IMR-90 (cell line): ENCODE measurements at regions of chr11 and their contacts with region 1.

Region 1: GRCh38 chr11:44998051-44998450 is 47.4 kb upstream of the TP53I11 start:
- DNase-seq: no peak
- ATAC-seq: no peak
- H3K4me3 ChIP-seq: no peak overlapping the region
- H3K27ac ChIP-seq: no peak overlapping the region
- H3K4me1 ChIP-seq: no peaks in the 10 kb centered on the region
- H3K27me3 ChIP-seq: peaks cover 40% of the 10 kb centered on the region
- CTCF ChIP-seq: no peak
- POLR2A ChIP-seq: no peak
- RAD21 ChIP-seq: no peak

Region 2: GRCh38 chr11:44950625-44951476 is 47.2 kb before region 1 on chr11 and contains the start of gene TP53I11:
- CTCF ChIA-PET with region 1: no interaction called
- POLR2A ChIA-PET with region 1: no interaction called
- dilution Hi-C with region 1: no loop called
- in situ Hi-C with region 1: no loop called
- intact Hi-C with region 1: loop called (anchors 2 kb)
- DNase-seq: peak; percentile 60
- ATAC-seq: peak; percentile 84
- H3K4me3 ChIP-seq: peak within 1 kb of the TSS; percentile 95
- H3K27ac ChIP-seq: peak within 1 kb of the TSS; percentile 87
- H3K4me1 ChIP-seq: peaks cover 11% of the 10 kb centered on the region
- H3K27me3 ChIP-seq: no peaks in the 10 kb centered on the region
- CTCF ChIP-seq: peak; percentile 60
- POLR2A ChIP-seq: no peak
- RAD21 ChIP-seq: no peak
- total RNA-seq, gene TP53I11: 3.9 TPM in 2 replicates

Region 3: DNA sequence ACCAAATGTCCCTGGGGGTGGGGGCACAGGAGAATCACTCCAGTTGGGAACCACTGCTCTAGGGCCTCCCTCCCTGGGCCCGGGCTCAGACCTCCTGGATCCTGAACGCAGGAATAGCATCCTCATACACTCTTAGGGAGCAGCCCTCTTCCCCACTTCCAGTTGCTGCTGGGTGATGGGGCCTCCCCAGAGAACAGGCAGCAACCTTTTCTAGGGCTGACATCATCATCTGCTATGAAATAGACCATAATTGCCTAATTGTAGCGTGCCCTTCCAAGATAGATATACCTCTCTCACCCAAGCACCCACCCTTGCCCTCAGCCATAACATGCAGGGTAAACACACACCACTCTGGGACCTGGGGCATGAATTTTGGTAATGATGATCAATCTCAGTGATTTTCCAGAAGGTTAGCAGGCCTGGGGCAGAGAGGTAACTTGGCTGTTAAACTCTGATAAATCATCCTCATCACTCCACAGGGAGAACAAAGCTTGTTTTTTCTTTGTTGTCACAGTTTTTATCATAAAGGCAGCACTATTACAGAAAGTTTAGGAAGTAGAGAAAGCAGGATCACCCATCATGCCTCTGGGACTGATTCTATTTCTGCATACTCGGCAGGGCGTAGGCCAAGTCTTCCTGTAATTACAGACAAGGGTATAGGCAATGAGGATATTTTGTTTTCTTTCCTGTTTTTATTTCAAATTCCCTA is 60.0 kb after region 1 on chr11:
- CTCF ChIA-PET with region 1: no interaction called
- POLR2A ChIA-PET with region 1: no interaction called
- dilution Hi-C with region 1: no loop called
- in situ Hi-C with region 1: no loop called
- intact Hi-C with region 1: no loop called
- DNase-seq: no peak
- ATAC-seq: no peak
- H3K4me3 ChIP-seq: no peak overlapping the region
- H3K27ac ChIP-seq: no peak overlapping the region
- H3K4me1 ChIP-seq: peaks cover 3% of the 10 kb centered on the region; the same call in 1 of the 2 replicates
- H3K27me3 ChIP-seq: peaks cover 11% of the 10 kb centered on the region; the same call in 1 of the 2 replicates
- CTCF ChIP-seq: no peak
- POLR2A ChIP-seq: no peak
- RAD21 ChIP-seq: no peak